Activated B cell treated with CpG ODN at 0.5 μM for 24 hours (primary cell): ENCODE measurements at regions of chr7 and their contacts with region 1.

Region 1: GRCh38 chr7:91140984-91141383 is 123.2 kb upstream of the FZD1 start:
- DNase-seq: no peak
- ATAC-seq: peak; percentile 68
- H3K4me3 Mint-ChIP-seq: no peak overlapping the region
- H3K27ac Mint-ChIP-seq: peak overlapping the region; percentile 30
- H3K4me1 Mint-ChIP-seq: peaks cover 36% of the 10 kb centered on the region
- H3K27me3 Mint-ChIP-seq: no peaks in the 10 kb centered on the region
- CTCF ChIP-seq: no peak

Region 2: DNA sequence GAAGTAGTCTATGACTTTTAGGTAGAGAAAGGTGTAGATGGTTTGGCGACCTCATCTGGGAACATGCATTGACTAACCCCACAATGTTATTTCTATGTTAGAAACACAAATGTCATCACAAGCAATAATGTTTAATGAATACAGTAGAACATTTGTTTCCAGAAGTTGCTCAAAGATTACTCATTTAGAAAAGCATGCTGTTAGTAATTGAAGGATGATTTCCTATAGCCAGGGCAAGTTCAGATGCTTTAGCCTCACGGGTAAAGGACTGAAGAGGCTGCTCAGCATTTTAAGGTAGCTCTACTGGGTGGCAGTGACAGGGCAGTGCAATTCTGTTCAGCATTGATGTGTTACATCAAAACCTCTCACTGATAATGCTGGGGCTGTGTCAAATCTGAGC is 76.0 kb before region 1 on chr7:
- CTCF ChIA-PET with region 1: no interaction called
- POLR2A ChIA-PET with region 1: no interaction called
- intact Hi-C with region 1: no loop called
- DNase-seq: no peak
- ATAC-seq: no peak
- H3K4me3 Mint-ChIP-seq: no peak overlapping the region
- H3K27ac Mint-ChIP-seq: no peak overlapping the region
- H3K4me1 Mint-ChIP-seq: peaks cover 26% of the 10 kb centered on the region
- H3K27me3 Mint-ChIP-seq: no peaks in the 10 kb centered on the region
- CTCF ChIP-seq: no peak

Region 3: GRCh38 chr7:91112902-91113341 is 28.1 kb before region 1 on chr7:
- CTCF ChIA-PET with region 1: no interaction called
- POLR2A ChIA-PET with region 1: no interaction called
- intact Hi-C with region 1: no loop called
- DNase-seq: no peak
- ATAC-seq: no peak
- H3K4me3 Mint-ChIP-seq: no peak overlapping the region
- H3K27ac Mint-ChIP-seq: no peak overlapping the region
- H3K4me1 Mint-ChIP-seq: no peaks in the 10 kb centered on the region
- H3K27me3 Mint-ChIP-seq: no peaks in the 10 kb centered on the region
- CTCF ChIP-seq: no peak

Region 4: DNA sequence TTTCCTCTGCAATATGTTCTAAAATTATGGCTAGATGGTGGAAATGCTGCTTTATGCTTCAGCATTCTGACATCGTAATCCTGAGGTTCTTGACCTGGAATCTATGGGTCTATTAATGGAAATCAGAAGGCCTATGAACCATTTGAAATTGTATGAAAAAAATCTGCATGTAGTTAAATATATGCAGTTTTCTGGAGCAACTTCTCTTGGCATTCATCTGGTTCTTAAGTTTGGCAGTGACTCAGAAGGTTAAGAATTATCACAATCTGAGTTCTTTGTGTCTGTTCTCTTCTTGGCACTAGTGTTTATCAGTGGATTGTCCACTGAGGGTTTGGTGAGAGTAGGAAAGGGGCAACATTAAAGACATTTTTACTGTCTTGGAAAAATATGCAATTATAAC is 52.2 kb after region 1 on chr7:
- CTCF ChIA-PET with region 1: no interaction called
- POLR2A ChIA-PET with region 1: no interaction called
- intact Hi-C with region 1: loop called (anchors 10 kb)
- DNase-seq: no peak
- ATAC-seq: no peak
- H3K4me3 Mint-ChIP-seq: no peak overlapping the region
- H3K27ac Mint-ChIP-seq: no peak overlapping the region
- H3K4me1 Mint-ChIP-seq: no peaks in the 10 kb centered on the region
- H3K27me3 Mint-ChIP-seq: no peaks in the 10 kb centered on the region
- CTCF ChIP-seq: no peak